CD4-positive, alpha-beta memory T cell (primary cell): ENCODE measurements at regions of chr3 and their contacts with region 1.

Region 1: DNA sequence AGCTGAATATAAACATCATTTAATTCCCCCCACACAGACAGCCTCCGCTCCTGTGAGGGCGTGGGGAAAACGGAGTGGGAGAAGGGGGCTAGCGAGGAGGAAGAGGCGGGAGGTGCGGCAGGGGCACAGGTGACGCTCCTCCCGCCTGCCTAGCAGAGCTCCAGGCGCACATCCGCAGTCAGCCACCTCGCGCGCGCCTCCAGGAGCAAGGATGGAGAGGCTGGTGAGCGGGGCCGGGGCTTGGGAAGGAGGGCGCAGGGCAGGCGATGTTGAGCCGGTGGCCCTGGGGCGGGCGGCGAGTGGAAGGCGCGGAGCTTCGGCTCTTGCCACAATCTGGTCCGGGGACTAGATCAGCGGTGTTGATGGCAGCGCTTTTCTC is at the start of gene CD200:
- DNase-seq: peak; percentile 36 to 44 (median 42)
- H3K4me3 ChIP-seq: peak within 1 kb of the TSS; percentile 39 to 61
- H3K4me3 Mint-ChIP-seq: peak within 1 kb of the TSS; percentile 88 to 93 (median 90)
- H3K27ac ChIP-seq: peak within 1 kb of the TSS; percentile 25
- H3K27ac Mint-ChIP-seq: peak within 1 kb of the TSS; percentile 2 to 89 (median 74)
- H3K4me1 ChIP-seq: peaks cover 27% of the 10 kb centered on the region
- H3K4me1 Mint-ChIP-seq: peaks cover 13 to 45% (median 32%) of the 10 kb centered on the region in 4 donors
- H3K27me3 ChIP-seq: no peaks in the 10 kb centered on the region
- H3K27me3 Mint-ChIP-seq: no peaks in the 10 kb centered on the region
- total RNA-seq, gene CD200: 0.93 to 1.8 TPM

Region 2: DNA sequence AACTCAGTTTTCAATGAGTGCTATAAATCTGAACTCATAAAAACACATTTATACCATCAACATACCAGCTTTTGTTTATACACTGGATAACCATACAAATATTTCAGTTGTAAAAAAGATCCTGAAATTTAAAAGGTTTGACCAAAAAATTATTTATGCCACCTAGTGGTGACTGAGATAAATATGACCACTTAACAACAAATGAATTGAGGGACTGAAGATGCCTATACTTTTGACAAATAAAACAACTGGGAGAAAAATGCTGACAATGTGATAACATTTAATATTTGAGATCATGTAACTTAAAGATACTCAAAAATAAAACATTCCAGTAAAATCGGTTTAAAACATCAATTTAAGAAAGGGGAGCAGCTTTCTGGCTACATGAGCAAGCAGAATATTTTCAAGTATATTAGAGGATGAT is 198.4 kb after region 1 on chr3:
- CTCF ChIA-PET with region 1: interaction called, 13 read pairs
- POLR2A ChIA-PET with region 1: no interaction called
- intact Hi-C with region 1: no loop called
- DNase-seq: peak in 4 of 5 donors; percentile 22 to 37 (median 30)
- H3K4me3 ChIP-seq: no peak overlapping the region
- H3K4me3 Mint-ChIP-seq: no peak overlapping the region
- H3K27ac ChIP-seq: no peak overlapping the region
- H3K27ac Mint-ChIP-seq: peak overlapping the region in 2 of 7 donors; percentile 5 to 12
- H3K4me1 ChIP-seq: no peaks in the 10 kb centered on the region
- H3K4me1 Mint-ChIP-seq: peaks cover 0 to 4% (median 2%) of the 10 kb centered on the region in 4 donors
- H3K27me3 ChIP-seq: no peaks in the 10 kb centered on the region
- H3K27me3 Mint-ChIP-seq: no peaks in the 10 kb centered on the region